ENCODE measurements at regions of chr2 and their contacts with region 1.

Region 1: DNA sequence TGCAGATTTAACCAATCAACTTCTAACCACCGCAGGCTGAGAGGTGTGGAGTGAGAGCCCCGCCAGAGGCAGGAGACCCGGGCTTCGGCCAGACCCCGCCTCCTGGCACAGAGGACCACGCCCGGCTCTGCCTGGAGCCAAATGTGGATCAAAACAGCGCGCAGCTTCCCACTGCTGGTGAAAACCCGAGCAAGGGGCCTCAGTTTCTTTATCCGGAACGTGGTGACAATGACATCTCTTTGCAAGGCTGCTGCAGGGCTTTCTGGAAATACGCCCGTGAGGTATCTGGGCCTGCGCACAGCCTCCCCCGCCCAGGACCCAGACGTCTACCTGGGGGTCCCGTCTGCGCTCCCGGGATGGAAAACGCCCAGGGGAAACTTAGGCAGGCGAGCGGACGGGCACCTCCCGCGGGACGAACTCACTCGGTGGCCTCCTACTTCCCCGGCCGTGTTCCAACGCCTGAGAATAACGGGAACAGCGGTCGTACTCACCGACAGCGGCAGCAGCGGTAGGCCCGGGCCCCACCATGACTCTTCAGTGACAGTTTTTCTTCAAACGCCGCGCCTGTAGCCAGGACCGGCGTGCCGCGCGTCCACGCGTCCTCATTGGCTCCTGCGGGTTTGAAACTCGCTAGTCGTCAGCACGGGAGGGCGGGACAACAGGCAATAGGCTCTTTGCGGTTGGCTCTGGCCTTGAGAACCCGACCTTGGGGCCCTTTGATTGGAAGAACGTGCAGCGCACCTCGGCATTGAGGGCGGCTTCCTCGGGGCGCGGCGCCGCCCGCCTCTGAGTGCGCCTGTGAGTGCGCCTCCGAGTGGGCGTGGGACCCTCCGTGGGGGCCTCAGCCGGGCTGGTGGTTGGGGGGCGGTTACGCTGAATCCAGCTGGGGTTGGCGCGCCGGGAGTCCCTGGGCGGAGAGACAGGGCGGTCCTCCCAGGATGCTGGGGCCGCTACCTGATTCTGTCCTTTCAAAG is at the start of gene CKAP2L:
- DNase-seq: peak; percentile 98
- H3K4me3 Mint-ChIP-seq: peak within 1 kb of the TSS; percentile 90
- H3K27ac Mint-ChIP-seq: peak within 1 kb of the TSS; percentile 85
- H3K4me1 Mint-ChIP-seq: peaks cover 31% of the 10 kb centered on the region
- H3K27me3 Mint-ChIP-seq: no peaks in the 10 kb centered on the region
- total RNA-seq, gene CKAP2L: 42.1 to 46.1 TPM

Region 2: DNA sequence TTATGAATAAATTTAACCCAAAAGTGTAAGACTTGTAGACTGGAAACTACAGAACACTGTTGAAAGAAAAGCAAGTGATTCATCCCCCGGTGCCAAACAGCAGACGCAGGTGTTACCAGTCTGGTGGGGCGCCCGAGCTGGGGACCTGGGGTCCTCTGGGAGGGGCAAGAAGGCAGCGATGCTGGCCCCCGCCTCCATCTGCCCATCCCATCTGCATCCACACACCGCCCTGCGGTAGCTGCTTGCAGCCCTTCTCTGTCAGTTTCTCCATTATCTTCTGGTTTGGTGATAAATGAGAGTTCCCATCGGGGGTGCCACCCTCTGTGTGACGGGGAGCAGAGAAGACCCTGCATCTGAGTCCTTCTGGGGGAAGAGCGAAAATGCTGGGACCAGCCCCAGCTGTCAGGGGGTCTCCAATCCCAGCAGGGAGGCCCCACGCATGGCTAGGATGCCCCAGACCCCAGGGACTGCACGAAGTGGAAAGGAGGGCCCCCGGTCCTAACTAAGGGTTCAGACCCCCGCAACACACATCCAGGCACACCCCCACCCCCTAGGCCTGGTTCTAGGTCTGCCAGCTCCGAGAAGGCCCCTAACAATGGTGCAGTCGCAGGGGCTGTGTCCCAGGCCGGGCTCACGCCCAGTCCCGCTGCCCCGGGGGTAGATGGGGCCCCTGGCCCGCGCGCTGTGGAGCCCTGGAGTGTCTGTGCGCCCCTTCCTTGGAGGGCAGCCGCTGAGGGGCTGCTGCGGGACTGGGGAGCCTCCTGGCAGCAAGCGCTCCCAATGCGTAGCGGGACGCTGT is 330.2 kb before region 1 on chr2:
- CTCF ChIA-PET with region 1: no interaction called
- POLR2A ChIA-PET with region 1: no interaction called
- intact Hi-C with region 1: no loop called
- DNase-seq: no peak
- H3K4me3 Mint-ChIP-seq: no peak overlapping the region
- H3K27ac Mint-ChIP-seq: no peak overlapping the region
- H3K4me1 Mint-ChIP-seq: peaks cover 14% of the 10 kb centered on the region
- H3K27me3 Mint-ChIP-seq: peaks cover 9% of the 10 kb centered on the region

Region 3: GRCh38 chr2:112658820-112659667 is 105.3 kb before region 1 on chr2:
- CTCF ChIA-PET with region 1: no interaction called
- POLR2A ChIA-PET with region 1: no interaction called
- intact Hi-C with region 1: no loop called
- DNase-seq: no peak
- H3K4me3 Mint-ChIP-seq: no peak overlapping the region
- H3K27ac Mint-ChIP-seq: peak overlapping the region; percentile 58
- H3K4me1 Mint-ChIP-seq: peaks cover 59% of the 10 kb centered on the region
- H3K27me3 Mint-ChIP-seq: no peaks in the 10 kb centered on the region

Region 4: GRCh38 chr2:112803691-112804521 is 39.5 kb after region 1 on chr2:
- CTCF ChIA-PET with region 1: no interaction called
- POLR2A ChIA-PET with region 1: no interaction called
- intact Hi-C with region 1: loop called (anchors 2 kb)
- DNase-seq: no peak
- H3K4me3 Mint-ChIP-seq: no peak overlapping the region
- H3K27ac Mint-ChIP-seq: peak overlapping the region; percentile 90
- H3K4me1 Mint-ChIP-seq: peaks cover 43% of the 10 kb centered on the region
- H3K27me3 Mint-ChIP-seq: no peaks in the 10 kb centered on the region

Measured in activated CD4-positive, alpha-beta memory T cell treated with anti-CD3 and anti-CD28 coated beads for 36 hours (primary cell).